ENCODE measurements at regions of chr12 and their contacts with region 1.

Region 1: DNA sequence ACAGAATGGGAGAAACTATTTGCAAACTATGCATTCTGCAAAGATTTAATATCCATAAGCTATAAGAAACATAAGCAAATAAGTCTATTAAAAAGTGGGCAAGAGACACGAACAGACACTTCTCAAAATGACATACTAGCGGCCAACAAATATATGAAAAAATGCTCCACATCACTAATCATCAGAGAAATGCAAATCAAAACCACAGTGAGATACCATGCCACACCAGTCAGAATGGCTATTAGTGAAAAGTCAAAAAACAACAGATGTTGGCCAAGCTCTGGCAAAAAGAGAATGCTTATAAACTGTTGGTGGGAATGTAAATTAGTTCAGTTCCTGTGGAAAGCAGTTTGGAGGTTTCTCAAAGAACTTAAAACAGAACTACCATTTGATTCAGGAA is 121.3 kb downstream of the KCNMB4 start:
- DNase-seq: no peak
- H3K4me3 ChIP-seq: no peak overlapping the region
- H3K27ac ChIP-seq: no peak overlapping the region
- H3K4me1 ChIP-seq: no peaks in the 10 kb centered on the region
- H3K27me3 ChIP-seq: peaks cover 2 to 5% of the 10 kb centered on the region in 2 experiments
- CTCF ChIP-seq: no peak
- POLR2A ChIP-seq: no peak

Region 2: GRCh38 chr12:70467908-70468733 is 19.3 kb before region 1 on chr12:
- CTCF ChIA-PET with region 1: no interaction called
- POLR2A ChIA-PET with region 1: no interaction called
- dilution Hi-C with region 1: no loop called
- intact Hi-C with region 1: loop called (anchors 2 kb)
- DNase-seq: no peak
- H3K4me3 ChIP-seq: no peak overlapping the region
- H3K27ac ChIP-seq: no peak overlapping the region
- H3K4me1 ChIP-seq: no peaks in the 10 kb centered on the region
- H3K27me3 ChIP-seq: peaks cover 0 to 1% of the 10 kb centered on the region in 2 experiments
- CTCF ChIP-seq: no peak
- POLR2A ChIP-seq: no peak